HEK293 (cell line): ENCODE measurements at regions of chr20 and their contacts with region 1.

Region 1: DNA sequence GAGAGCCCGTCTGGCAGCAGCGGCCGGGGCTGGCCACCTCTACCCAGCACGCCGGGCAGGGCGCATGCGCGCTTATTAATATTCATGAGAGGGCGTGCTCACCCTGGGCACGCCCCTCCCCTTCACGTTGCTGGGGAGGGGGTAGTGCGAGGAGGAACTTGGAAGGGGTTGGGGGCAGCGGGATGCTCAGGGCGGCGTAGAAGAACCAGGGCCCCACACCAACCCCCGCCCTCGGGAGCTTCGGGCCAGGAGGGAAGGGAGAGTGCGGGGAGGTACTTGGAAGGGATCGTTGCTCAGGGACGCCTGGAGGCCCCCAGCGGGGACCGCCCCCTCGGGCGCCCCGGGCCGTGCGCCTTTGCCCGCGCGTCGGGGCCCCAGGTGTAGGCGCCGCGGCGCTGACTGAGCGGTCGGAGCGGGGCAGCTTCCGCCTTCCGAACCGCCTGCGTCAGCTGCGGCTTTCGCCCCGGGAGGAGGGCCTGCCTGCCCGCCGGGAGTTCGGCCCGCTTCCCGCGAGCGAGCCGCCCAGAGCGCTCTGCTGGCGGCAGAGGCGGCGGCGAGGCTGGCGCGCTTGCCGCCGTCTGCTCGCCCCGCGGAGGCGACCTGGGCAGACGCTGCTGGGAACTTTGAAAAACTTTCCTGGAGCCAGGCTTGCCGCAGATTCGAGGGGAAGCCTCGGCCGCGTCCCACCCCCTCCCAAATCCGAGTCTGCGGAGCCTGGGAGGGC is at the start of gene JAG1:
- H3K4me3 ChIP-seq: peak within 1 kb of the TSS; percentile 82
- H3K27ac ChIP-seq: peak within 1 kb of the TSS; percentile 99
- H3K4me1 ChIP-seq: peaks cover 20% of the 10 kb centered on the region
- CTCF ChIP-seq: no peak

Region 2: DNA sequence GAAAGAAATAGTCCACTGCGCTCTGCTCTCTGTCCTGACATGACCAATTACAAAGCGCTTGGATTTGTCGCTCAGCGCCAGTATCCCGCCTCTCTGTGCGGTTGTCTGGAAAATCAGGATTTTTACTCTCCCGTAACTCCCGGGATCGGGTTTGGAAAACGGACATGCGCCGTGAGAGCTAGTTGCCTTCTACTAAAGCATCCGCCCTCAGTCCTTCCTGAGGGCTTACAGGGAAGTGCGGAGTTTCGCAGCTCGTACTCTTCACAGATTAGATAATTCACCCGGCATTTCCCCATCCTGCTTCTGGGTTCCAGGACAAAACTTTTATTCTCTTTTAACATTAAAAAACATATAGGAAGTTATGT is 239.7 kb before region 1 on chr20:
- CTCF ChIA-PET with region 1: no interaction called
- POLR2A ChIA-PET with region 1: interaction called, 12 read pairs
- H3K4me3 ChIP-seq: peak overlapping the region; percentile 67
- H3K27ac ChIP-seq: peak overlapping the region; percentile 85
- H3K4me1 ChIP-seq: no peaks in the 10 kb centered on the region
- CTCF ChIP-seq: no peak

Region 3: GRCh38 chr20:10686356-10687133 is 12.4 kb after region 1 on chr20:
- CTCF ChIA-PET with region 1: interaction called, 4 read pairs
- POLR2A ChIA-PET with region 1: interaction called, 17 read pairs
- H3K4me3 ChIP-seq: no peak overlapping the region
- H3K27ac ChIP-seq: no peak overlapping the region
- H3K4me1 ChIP-seq: no peaks in the 10 kb centered on the region
- CTCF ChIP-seq: no peak

Region 4: DNA sequence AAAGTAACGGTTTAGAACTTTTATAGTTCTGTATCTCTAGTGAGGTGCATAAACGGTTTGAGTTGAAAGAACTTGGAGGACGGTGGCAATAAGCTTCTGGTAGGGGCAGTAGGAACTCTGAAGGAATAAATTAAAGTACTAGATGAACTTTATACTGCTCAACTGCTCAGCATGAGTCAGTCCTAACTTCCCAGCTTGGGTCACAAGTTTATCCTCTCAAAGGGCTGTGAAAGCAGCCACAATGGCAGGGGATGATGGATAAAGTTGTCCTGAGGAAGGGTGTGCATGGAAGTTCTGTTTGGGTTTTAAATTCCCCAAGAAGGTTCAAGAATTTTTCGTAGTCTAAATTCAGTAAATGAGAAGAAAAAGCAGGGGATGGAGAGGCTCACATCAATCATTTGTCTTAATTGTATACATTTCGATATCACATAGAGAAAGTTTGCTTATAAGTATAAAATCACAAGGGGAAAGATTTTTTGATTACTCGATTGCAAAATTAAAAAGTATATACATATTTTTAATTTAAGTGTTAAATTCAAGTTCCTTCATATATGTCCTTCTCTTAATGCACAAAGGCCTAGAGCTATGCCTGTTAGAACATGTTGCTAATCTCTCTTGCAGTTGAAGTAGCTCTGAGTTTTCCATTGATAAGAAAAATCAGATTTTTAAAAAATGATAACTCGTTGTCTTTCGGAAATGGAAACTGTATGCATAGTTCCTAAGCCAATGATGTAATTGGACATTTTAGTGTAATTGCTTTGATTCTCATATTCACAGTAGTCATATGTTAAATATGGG is 54.9 kb after region 1 on chr20:
- CTCF ChIA-PET with region 1: no interaction called
- POLR2A ChIA-PET with region 1: no interaction called
- H3K4me3 ChIP-seq: no peak overlapping the region
- H3K27ac ChIP-seq: no peak overlapping the region
- H3K4me1 ChIP-seq: no peaks in the 10 kb centered on the region
- CTCF ChIP-seq: no peak

Region 5: GRCh38 chr20:10877342-10877741 is 203.2 kb after region 1 on chr20:
- CTCF ChIA-PET with region 1: no interaction called
- POLR2A ChIA-PET with region 1: no interaction called
- H3K4me3 ChIP-seq: no peak overlapping the region
- H3K27ac ChIP-seq: no peak overlapping the region
- H3K4me1 ChIP-seq: no peaks in the 10 kb centered on the region
- CTCF ChIP-seq: no peak

Region 6: DNA sequence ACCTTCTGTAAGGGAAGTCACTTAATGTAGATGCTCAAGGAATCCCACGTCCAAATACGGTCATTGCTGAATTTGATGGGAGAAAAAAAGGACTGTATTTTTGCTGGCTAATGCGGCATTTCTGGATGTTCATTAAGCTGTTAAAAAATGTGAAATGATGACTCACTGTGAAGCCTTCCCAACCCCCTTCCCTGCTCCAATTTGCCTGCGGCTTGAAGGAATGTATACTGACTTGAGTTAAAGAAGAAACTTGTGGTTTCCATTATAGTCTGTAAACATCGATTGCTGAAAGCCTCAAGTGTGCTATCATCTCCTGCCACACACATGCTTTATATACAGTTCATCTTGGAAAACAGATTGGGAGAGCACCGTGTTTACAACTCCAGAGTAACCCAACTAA is 248.8 kb after region 1 on chr20:
- CTCF ChIA-PET with region 1: interaction called, 3 read pairs
- POLR2A ChIA-PET with region 1: interaction called, 14 read pairs
- H3K4me3 ChIP-seq: no peak overlapping the region
- H3K27ac ChIP-seq: peak overlapping the region; percentile 48
- H3K4me1 ChIP-seq: peaks cover 15% of the 10 kb centered on the region
- CTCF ChIP-seq: no peak